Activated B cell treated with CpG ODN at 0.5 μM for 24 hours (primary cell): ENCODE measurements at regions of chr12 and their contacts with region 1.

Region 1: GRCh38 chr12:24778486-24779304 is 170.2 kb downstream of the BCAT1 start:
- DNase-seq: no peak
- ATAC-seq: peak; percentile 95
- H3K4me3 Mint-ChIP-seq: no peak overlapping the region
- H3K27ac Mint-ChIP-seq: peak overlapping the region; percentile 50
- H3K4me1 Mint-ChIP-seq: peaks cover 34% of the 10 kb centered on the region
- H3K27me3 Mint-ChIP-seq: no peaks in the 10 kb centered on the region
- CTCF ChIP-seq: peak; percentile 61

Region 2: DNA sequence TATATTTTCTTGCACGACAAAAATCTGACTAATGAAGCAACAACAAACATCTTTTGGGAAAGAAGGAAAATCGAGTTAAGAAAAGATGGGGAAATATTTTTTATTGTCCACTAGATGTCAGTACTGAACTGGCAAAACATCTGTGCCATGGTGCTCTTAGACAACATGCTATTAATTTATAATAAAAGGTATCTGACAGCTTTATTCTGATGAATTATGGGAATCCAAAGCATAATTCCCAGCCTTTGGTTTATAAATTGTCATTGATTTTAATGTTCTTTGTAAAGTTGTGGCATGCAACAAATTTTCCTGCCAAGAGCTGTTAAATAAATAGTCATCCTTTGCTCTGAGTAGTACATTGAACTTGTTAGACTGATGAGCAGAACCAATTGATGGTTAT is 1922.5 kb before region 1 on chr12:
- CTCF ChIA-PET with region 1: interaction called, 10 read pairs
- POLR2A ChIA-PET with region 1: no interaction called
- intact Hi-C with region 1: loop called (anchors 1 kb)
- DNase-seq: no peak
- ATAC-seq: no peak
- H3K4me3 Mint-ChIP-seq: no peak overlapping the region
- H3K27ac Mint-ChIP-seq: no peak overlapping the region
- H3K4me1 Mint-ChIP-seq: no peaks in the 10 kb centered on the region
- H3K27me3 Mint-ChIP-seq: peaks cover 5% of the 10 kb centered on the region
- CTCF ChIP-seq: no peak

Region 3: DNA sequence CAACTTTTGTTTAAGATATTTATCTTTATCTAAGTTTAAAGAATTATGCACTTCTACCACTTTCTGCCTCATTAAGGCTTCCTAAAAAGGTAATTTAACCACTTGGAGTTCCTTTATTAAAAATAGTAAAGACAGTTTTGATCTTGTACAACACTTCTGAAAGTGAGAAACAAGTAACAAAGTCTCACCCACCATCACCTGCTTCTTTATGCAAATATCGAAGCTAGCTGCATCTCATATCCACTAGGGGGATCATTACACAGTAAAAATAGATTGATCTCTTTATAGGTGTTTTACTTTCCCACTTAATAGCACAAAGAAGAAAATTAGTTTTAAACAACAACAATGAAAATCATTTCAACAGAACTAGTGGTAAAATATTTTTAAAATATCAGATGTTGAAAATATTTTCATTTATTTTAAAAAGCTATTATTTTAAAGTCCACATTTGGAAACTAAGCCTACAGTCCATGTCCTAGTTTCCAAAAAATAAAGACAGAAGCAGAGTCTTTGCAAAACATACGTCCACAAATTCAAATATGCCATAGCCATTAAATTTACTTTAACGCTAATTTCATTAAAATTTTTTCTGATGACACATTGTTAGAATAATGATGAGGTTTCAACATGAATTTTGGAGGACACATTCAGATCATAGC is 669.2 kb before region 1 on chr12:
- CTCF ChIA-PET with region 1: interaction called, 5 read pairs
- POLR2A ChIA-PET with region 1: no interaction called
- intact Hi-C with region 1: loop called (anchors 1 kb)
- DNase-seq: no peak
- ATAC-seq: peak; percentile 64
- H3K4me3 Mint-ChIP-seq: no peak overlapping the region
- H3K27ac Mint-ChIP-seq: no peak overlapping the region
- H3K4me1 Mint-ChIP-seq: peaks cover 5% of the 10 kb centered on the region
- H3K27me3 Mint-ChIP-seq: no peaks in the 10 kb centered on the region
- CTCF ChIP-seq: peak; percentile 36

Region 4: GRCh38 chr12:24386109-24386508 is 392.6 kb before region 1 on chr12:
- CTCF ChIA-PET with region 1: interaction called, 3 read pairs
- POLR2A ChIA-PET with region 1: interaction called, 13 read pairs
- intact Hi-C with region 1: no loop called
- DNase-seq: no peak
- ATAC-seq: no peak
- H3K4me3 Mint-ChIP-seq: no peak overlapping the region
- H3K27ac Mint-ChIP-seq: no peak overlapping the region
- H3K4me1 Mint-ChIP-seq: peaks cover 9% of the 10 kb centered on the region
- H3K27me3 Mint-ChIP-seq: no peaks in the 10 kb centered on the region
- CTCF ChIP-seq: no peak

Region 5: DNA sequence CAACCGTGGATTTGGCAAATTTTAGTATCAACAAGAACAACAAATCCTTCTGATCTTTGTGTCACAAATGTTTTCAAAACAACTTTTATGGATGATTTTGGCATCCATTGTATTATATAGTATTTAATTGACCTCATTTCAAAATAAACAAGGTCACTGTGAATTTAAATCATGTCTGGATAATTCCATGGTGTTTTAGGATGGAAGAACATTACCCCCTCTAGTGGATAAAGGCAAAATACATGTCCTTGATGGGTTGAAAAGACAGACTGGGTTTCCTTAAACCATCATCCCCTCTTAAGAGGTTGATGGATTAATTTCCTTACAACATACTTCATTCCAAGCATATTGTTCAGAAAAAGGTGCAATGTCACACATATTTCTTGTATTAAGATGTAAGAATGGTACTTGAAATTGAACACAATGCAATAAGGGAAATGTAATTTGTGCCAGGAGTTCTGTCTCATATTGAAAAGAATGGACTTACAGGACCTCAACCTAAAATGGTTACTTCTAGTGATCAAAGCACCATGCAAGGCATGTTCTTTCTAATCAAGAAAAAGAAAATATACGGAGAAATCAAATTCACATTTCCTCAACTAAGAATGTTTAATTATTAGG is 181.8 kb before region 1 on chr12:
- CTCF ChIA-PET with region 1: no interaction called
- POLR2A ChIA-PET with region 1: interaction called, 4 read pairs
- intact Hi-C with region 1: loop called (anchors 1 kb)
- DNase-seq: no peak
- ATAC-seq: no peak
- H3K4me3 Mint-ChIP-seq: no peak overlapping the region
- H3K27ac Mint-ChIP-seq: no peak overlapping the region
- H3K4me1 Mint-ChIP-seq: peaks cover 42% of the 10 kb centered on the region
- H3K27me3 Mint-ChIP-seq: no peaks in the 10 kb centered on the region
- CTCF ChIP-seq: no peak

Region 6: GRCh38 chr12:24838531-24838950 is 59.8 kb after region 1 on chr12:
- CTCF ChIA-PET with region 1: interaction called, 10 read pairs
- POLR2A ChIA-PET with region 1: interaction called, 11 read pairs
- intact Hi-C with region 1: loop called (anchors 1 kb)
- DNase-seq: no peak
- ATAC-seq: no peak
- H3K4me3 Mint-ChIP-seq: no peak overlapping the region
- H3K27ac Mint-ChIP-seq: peak overlapping the region; percentile 24
- H3K4me1 Mint-ChIP-seq: peaks cover 23% of the 10 kb centered on the region
- H3K27me3 Mint-ChIP-seq: no peaks in the 10 kb centered on the region
- CTCF ChIP-seq: no peak